AG04450 (cell line): ENCODE measurements at regions of chr22 and their contacts with region 1.

Region 1: GRCh38 chr22:38503021-38503420 is 3.1 kb downstream of the DDX17 start:
- DNase-seq: no peak
- H3K4me3 ChIP-seq: peak overlapping the region; percentile 83
- H3K27ac ChIP-seq: no peak overlapping the region
- H3K27me3 ChIP-seq: no peaks in the 10 kb centered on the region
- CTCF ChIP-seq: no peak

Region 2: DNA sequence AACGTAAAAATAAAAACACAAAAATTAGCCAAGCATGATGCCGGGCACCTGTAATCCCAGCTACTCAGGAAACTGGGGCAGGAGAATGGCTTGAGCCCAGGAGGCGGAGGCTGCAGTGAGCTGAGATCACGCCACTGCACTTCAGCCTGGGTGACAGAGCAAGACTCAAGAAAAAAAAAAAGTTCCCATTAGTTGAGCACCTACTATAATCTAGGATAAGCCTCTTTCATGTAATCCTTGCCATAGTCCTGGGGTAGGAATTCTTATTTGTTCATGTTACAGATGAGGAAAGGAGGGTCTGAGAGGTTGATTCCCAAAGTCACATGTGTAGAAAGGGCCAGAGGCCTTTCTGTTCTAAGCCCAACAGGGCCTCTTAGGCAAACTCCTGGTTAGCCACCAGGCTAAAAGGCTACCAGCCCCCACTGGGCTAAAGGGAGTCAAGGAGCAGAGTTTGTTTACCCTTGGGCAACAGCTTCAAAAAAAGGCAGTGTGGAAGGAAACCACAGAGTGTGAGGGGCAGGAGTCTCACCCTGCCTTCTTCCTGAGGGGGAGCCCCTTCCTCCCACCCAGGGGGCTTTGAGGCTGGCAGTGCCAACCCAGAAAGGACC is 164.1 kb before region 1 on chr22:
- CTCF ChIA-PET with region 1: no interaction called
- POLR2A ChIA-PET with region 1: no interaction called
- DNase-seq: no peak
- H3K4me3 ChIP-seq: no peak overlapping the region
- H3K27ac ChIP-seq: no peak overlapping the region
- H3K27me3 ChIP-seq: no peaks in the 10 kb centered on the region
- CTCF ChIP-seq: no peak

Region 3: DNA sequence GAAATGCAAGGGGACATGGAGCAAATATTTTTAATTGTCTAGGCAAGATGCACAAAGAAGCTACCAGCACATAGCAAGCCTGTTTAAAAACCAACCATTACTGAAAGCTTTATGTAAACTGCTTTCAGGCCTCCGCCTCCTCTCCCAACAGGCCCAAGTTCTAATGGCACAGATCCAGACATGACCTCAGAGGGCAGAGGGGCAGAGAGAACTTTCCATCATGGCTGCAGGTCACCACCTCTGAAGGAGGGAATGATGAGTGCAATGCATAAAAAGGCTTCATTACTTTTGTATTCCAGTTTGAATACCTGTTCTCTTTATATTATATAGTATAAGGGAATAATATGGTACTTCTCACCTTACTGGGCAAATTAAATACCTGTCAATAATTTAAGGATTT is 12.1 kb before region 1 on chr22:
- CTCF ChIA-PET with region 1: interaction called, 3 read pairs
- POLR2A ChIA-PET with region 1: interaction called, 10 read pairs
- DNase-seq: peak; percentile 54
- H3K4me3 ChIP-seq: no peak overlapping the region
- H3K27ac ChIP-seq: peak overlapping the region; percentile 40
- H3K27me3 ChIP-seq: no peaks in the 10 kb centered on the region
- CTCF ChIP-seq: no peak